ENCODE measurements at regions of chr10 and their contacts with region 1.

Region 1: GRCh38 chr10:91163269-91163868 is 57.1 kb upstream of the PCGF5 start:
- H3K4me3 ChIP-seq: peak overlapping the region; percentile 78
- H3K27ac ChIP-seq: peak overlapping the region; percentile 86
- H3K4me1 ChIP-seq: no peaks in the 10 kb centered on the region; the same call in 1 of the 2 replicates
- CTCF ChIP-seq: peak; percentile 28; the same call in 1 of the 2 replicates

Region 2: GRCh38 chr10:91150631-91151030 is 12.7 kb before region 1 on chr10:
- CTCF ChIA-PET with region 1: no interaction called
- POLR2A ChIA-PET with region 1: interaction called, 15 read pairs
- H3K4me3 ChIP-seq: no peak overlapping the region
- H3K27ac ChIP-seq: no peak overlapping the region
- H3K4me1 ChIP-seq: no peaks in the 10 kb centered on the region
- CTCF ChIP-seq: no peak

Measured in HEK293 (cell line).